SK-N-SH (cell line): ENCODE measurements at regions of chr14 and their contacts with region 1.

Region 1: GRCh38 chr14:100192672-100193416 is 33.4 kb upstream of the DEGS2 start:
- DNase-seq: peak; percentile 99
- H3K4me3 ChIP-seq: peak overlapping the region; percentile 44 to 54
- H3K27ac ChIP-seq: peak overlapping the region; percentile 44 to 77
- H3K4me1 ChIP-seq: peaks cover 4 to 12% of the 10 kb centered on the region in 2 experiments; a peak in 2 of 4 replicates
- H3K27me3 ChIP-seq: no peaks in the 10 kb centered on the region
- CTCF ChIP-seq: peak; percentile 81
- EP300 ChIP-seq: no peak
- RAD21 ChIP-seq: peak; percentile 85

Region 2: GRCh38 chr14:99982537-99983250 is 210.2 kb before region 1 on chr14:
- CTCF ChIA-PET with region 1: interaction called, 54 read pairs
- POLR2A ChIA-PET with region 1: no interaction called
- DNase-seq: peak; percentile 81
- H3K4me3 ChIP-seq: no peak overlapping the region; a peak in 1 of 4 replicates
- H3K27ac ChIP-seq: no peak overlapping the region
- H3K4me1 ChIP-seq: peaks cover 6 to 7% of the 10 kb centered on the region in 2 experiments; a peak in 1 of 4 replicates
- H3K27me3 ChIP-seq: no peaks in the 10 kb centered on the region
- CTCF ChIP-seq: peak; percentile 92
- EP300 ChIP-seq: no peak
- RAD21 ChIP-seq: peak; percentile 98

Region 3: GRCh38 chr14:100114109-100114765 is 78.6 kb before region 1 on chr14:
- CTCF ChIA-PET with region 1: interaction called, 43 read pairs
- POLR2A ChIA-PET with region 1: no interaction called
- DNase-seq: no peak
- H3K4me3 ChIP-seq: no peak overlapping the region
- H3K27ac ChIP-seq: no peak overlapping the region
- H3K4me1 ChIP-seq: peaks cover 0 to 9% of the 10 kb centered on the region in 2 experiments; a peak in 1 of 4 replicates
- H3K27me3 ChIP-seq: no peaks in the 10 kb centered on the region
- CTCF ChIP-seq: no peak
- EP300 ChIP-seq: no peak
- RAD21 ChIP-seq: no peak

Region 4: DNA sequence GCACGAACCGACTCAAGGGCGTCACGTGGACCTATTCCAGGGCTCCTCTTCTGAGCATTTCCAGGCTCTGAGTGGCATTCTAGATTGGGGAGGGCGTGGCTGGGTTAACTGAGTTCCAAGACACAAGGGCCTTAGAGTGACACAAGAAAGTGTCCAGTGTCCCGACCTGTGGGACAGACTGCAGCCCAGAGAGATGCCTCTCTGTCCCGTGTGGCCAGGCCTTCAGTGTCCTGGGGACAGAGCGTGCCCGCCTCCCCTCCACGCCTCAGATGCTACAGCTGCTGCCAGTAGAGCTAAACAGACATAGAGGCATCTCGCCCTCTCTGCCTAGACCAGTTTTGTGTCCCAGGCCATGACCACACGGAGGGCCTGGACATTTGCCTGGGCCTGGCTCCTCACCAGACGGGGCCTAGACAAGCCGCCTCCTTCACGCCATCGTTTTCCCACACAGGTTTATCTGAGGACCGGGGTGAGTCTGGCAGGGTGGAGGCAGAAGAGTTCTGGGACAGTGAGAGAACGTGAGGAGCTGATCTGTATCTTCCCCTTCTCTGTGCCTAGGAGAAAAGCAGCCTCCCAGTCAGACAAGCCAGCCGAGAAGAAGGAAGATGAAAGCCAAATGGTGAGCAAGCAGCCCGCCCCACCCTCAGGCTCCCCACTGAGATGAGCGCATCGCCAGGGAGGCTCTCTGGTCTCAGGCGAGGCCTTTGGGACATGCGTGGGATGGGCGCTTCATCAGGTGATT is 60.5 kb before region 1 on chr14:
- CTCF ChIA-PET with region 1: interaction called, 11 read pairs
- POLR2A ChIA-PET with region 1: interaction called, 4 read pairs
- DNase-seq: peak; percentile 58
- H3K4me3 ChIP-seq: no peak overlapping the region
- H3K27ac ChIP-seq: peak overlapping the region; percentile 28 to 74; a peak in 3 of 4 replicates
- H3K4me1 ChIP-seq: peaks cover 9 to 74% of the 10 kb centered on the region in 2 experiments; a peak in 3 of 4 replicates
- H3K27me3 ChIP-seq: no peaks in the 10 kb centered on the region
- CTCF ChIP-seq: no peak
- EP300 ChIP-seq: no peak
- RAD21 ChIP-seq: no peak

Region 5: DNA sequence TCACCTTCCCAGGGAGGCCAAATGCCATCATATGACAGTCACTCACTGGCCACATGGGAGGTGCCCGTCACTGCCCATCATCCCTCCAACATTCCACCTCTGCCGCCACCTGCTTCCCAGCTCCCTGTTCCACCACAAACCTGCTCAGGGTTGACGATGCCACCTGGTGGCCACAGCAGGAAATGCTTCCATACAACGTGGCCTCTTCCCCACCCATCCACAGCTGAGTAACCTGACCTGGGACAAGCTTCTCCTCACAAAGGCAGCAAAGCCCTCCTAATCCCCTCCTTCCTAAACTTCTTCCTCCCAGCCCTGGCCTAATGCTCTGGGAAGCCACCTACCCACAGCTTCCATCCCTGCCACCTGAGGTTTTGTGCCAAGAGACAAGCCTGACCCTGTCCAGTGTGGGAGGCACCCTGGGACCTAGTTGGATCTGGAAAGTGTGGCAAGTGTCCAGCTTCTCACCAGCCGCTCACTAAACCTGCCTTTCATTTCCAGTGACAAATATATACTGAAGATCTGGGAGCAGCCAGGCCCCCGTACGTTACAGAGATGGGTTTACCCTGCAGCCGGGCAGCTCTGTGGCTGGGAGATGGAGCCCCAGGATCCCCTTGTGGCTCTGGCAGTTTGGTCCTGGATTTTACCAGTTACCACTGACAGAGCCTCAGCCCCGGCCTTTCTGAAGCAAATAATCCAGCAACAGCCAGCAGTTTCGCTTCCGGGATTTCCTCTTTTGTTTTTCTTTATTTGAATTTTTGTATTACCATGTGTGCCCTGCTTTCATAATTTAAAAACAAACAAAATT is 37.6 kb before region 1 on chr14:
- CTCF ChIA-PET with region 1: interaction called, 22 read pairs
- POLR2A ChIA-PET with region 1: no interaction called
- DNase-seq: peak; percentile 64
- H3K4me3 ChIP-seq: no peak overlapping the region; a peak in 1 of 4 replicates
- H3K27ac ChIP-seq: peak overlapping the region in 1 of 2 experiments; percentile 14; a peak in 1 of 4 replicates
- H3K4me1 ChIP-seq: peaks cover 0 to 28% of the 10 kb centered on the region in 2 experiments; a peak in 2 of 4 replicates
- H3K27me3 ChIP-seq: peaks cover 6% of the 10 kb centered on the region
- CTCF ChIP-seq: peak; percentile 58
- EP300 ChIP-seq: no peak
- RAD21 ChIP-seq: no peak

Region 6: DNA sequence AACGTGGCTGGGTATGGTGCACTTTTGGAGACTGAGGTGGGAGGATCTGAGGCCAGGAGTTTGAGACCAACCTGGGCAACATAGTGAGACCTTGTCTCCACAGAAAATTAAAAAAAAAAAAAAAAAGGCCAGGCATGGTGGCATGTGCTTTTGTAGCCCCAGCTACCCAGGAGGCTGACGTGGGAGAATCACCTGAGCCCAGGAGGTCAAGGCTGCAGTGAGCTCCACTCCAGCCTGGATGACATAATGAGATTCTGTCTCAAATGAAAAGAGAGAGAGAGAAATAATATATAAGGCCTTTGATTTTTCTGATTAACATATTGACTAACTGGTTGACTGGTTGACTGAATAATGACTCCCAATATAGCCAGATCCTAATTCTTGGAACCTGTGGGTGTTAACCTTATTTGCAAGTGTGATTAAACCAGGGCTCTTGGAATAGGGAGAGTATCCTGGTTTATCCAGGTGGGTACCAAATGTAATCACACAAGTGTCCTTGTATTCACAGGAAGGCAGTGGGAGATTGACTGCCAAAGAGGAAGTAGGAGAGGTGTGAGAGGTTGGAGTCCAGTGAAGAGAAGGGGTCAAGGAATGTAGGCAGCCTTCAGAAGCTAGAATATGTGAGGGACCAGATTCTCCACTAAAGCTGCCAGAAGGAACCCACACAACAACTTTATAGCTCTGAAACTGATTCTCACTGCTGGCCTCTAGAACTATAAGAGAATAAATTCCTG is 58.1 kb after region 1 on chr14:
- CTCF ChIA-PET with region 1: no interaction called
- POLR2A ChIA-PET with region 1: no interaction called
- DNase-seq: no peak
- H3K4me3 ChIP-seq: no peak overlapping the region
- H3K27ac ChIP-seq: no peak overlapping the region
- H3K4me1 ChIP-seq: peaks cover 11 to 22% of the 10 kb centered on the region in 2 experiments; a peak in 3 of 4 replicates
- H3K27me3 ChIP-seq: no peaks in the 10 kb centered on the region
- CTCF ChIP-seq: no peak
- EP300 ChIP-seq: no peak
- RAD21 ChIP-seq: no peak